ENCODE measurements at regions of chr2 and their contacts with region 1.

Region 1: DNA sequence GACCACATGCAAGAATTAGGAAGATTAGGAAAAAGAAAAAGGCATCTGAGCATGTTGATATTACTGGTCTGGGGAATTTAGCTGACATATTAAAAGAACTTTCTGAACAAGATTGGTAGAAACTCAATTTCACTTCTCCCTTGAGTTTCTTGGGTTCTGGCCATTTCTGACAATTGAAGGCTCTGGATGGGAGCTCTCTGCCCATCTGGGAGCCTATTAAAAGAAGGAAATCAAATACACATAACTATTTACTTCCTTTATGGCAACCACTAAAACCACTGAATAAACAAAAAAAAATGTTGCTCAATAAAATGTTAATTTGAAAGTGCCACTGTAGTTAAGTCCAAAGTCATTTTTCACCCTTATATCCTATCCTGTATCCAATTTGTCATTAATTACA is 216.8 kb upstream of the HNMT start:
- DNase-seq: no peak
- H3K4me3 ChIP-seq: no peak overlapping the region
- H3K27ac ChIP-seq: no peak overlapping the region
- H3K4me1 ChIP-seq: no peaks in the 10 kb centered on the region
- H3K27me3 ChIP-seq: no peaks in the 10 kb centered on the region
- CTCF ChIP-seq: no peak
- EP300 ChIP-seq: no peak
- POLR2A ChIP-seq: no peak

Region 2: DNA sequence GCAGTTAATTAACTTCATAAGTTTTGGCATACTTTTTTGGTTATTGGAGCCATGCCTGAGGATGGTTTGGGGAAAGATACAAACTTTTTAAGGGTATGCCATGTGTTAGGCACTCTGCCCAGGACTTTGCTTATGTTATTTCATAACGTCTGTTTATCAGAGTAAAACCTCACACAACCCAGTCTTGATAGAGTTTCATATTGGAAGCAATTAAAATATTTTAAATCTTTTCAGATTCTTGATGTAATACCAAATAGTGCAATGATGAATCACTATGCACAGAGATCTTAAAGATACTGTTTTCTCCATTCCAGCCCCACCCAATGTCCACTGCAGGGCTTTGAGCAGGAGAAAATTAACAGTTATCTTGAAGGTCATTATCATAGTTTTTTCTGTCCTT is 312.3 kb before region 1 on chr2:
- in situ Hi-C with region 1: no loop called
- intact Hi-C with region 1: no loop called
- DNase-seq: no peak
- H3K4me3 ChIP-seq: no peak overlapping the region
- H3K27ac ChIP-seq: no peak overlapping the region
- H3K4me1 ChIP-seq: no peaks in the 10 kb centered on the region
- H3K27me3 ChIP-seq: no peaks in the 10 kb centered on the region
- CTCF ChIP-seq: no peak
- EP300 ChIP-seq: no peak
- POLR2A ChIP-seq: no peak

Region 3: DNA sequence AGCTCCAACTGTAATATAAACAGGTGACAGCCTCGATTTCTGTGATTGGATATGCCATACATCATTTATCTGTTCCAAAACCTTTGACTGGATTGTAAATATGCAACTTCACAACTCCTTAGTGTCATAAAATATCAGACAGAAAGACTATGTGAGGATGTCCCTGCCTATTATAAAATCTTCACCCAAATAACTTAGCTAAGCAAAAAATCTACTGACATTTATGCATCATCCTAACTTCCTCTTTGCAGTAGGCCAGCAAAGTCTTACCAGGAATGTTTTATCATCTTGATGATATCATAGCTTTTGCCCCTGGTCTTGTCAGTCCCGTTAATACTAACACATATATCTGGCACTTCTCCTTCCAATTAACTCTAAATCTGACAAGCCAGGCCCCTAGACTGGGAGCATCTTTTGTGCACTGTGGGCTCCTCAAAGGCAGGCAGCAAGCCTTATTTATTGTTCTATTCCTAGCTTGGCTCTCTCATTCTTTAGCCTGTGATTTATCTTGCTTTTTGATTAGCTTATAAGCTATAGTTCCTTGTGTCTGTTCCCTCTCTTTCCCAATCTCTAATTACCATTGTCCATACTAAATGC is 139.7 kb before region 1 on chr2:
- in situ Hi-C with region 1: no loop called
- intact Hi-C with region 1: no loop called
- DNase-seq: no peak
- H3K4me3 ChIP-seq: no peak overlapping the region
- H3K27ac ChIP-seq: no peak overlapping the region
- H3K4me1 ChIP-seq: no peaks in the 10 kb centered on the region
- H3K27me3 ChIP-seq: no peaks in the 10 kb centered on the region
- CTCF ChIP-seq: no peak
- EP300 ChIP-seq: no peak
- POLR2A ChIP-seq: no peak

Region 4: GRCh38 chr2:138877446-138877845 is 1129.9 kb after region 1 on chr2:
- in situ Hi-C with region 1: no loop called
- intact Hi-C with region 1: loop called (anchors 5 kb)
- DNase-seq: no peak
- H3K4me3 ChIP-seq: no peak overlapping the region
- H3K27ac ChIP-seq: no peak overlapping the region
- H3K4me1 ChIP-seq: no peaks in the 10 kb centered on the region
- H3K27me3 ChIP-seq: no peaks in the 10 kb centered on the region
- CTCF ChIP-seq: no peak
- EP300 ChIP-seq: no peak
- POLR2A ChIP-seq: no peak